Mammary epithelial cell (primary cell): ENCODE measurements at regions of chrX and their contacts with region 1.

Region 1: DNA sequence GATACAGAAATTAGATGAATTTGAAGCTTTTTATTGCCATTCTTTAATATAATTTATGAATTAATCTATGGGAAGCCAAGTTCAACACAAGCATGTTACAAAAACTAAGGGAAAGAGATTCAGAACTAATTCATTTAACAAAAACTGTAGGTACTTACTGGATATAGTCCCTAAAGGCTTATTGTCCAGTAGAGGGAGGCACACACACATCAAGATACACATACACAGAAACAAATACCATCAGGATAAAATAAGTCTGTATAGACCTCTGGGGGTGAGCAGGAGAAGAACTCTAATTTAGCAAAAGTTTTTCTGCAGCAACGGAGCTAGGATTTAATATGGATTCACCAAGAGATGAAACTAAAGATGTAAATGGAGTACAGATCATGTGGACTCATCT is 83.0 kb upstream of the IL13RA1 start:
- DNase-seq: peak; percentile 23
- H3K4me3 ChIP-seq: no peak overlapping the region
- H3K27ac ChIP-seq: no peak overlapping the region
- H3K4me1 ChIP-seq: no peaks in the 10 kb centered on the region
- H3K27me3 ChIP-seq: no peaks in the 10 kb centered on the region
- CTCF ChIP-seq: peak; percentile 21 to 57

Region 2: DNA sequence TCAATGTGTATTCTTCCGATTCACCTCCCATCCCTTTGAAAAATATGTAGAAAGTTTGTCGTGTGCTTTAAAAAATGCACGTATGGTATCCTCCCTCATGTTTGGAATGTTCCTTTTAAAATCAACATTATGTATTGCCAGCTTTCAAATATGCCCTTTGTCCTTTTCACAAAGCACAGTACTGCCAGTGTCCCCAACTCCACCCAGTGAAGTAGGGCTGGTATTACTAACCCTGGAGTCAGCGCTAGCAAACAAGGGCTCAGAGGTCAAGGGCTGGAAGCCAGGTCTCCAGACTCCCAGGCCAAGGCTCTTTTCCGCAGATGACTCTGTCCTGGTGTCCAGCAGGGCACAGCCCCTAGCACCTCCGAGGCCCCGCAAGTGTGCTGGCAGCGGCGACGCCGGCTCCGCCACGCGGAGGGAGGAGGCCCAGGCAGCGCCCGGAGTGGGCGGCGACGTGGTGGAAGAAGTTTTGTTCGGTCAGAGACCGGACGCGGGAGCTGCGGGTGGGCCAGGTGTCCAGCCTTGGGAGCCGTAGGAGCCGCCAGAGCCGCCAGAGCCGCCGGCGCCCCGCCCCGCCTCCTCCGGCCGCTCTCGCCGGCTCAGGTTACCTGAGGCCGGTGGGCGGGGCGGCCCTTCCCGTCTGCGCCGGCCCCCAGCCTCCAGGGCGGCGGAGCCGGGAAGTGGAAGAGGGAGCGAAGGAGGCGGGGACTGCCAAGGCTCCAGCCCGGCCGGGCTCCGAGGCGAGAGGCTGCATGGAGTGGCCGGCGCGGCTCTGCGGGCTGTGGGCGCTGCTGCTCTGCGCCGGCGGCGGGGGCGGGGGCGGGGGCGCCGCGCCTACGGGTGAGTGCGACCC is 82.7 kb after region 1 on chrX and contains the start of gene IL13RA1:
- CTCF ChIA-PET with region 1: no interaction called
- dilution Hi-C with region 1: no loop called
- in situ Hi-C with region 1: no loop called
- intact Hi-C with region 1: loop called (anchors 10 kb)
- DNase-seq: peak; percentile 84
- H3K4me3 ChIP-seq: peak within 1 kb of the TSS; percentile 53 to 67 (median 57)
- H3K27ac ChIP-seq: peak within 1 kb of the TSS; percentile 53
- H3K4me1 ChIP-seq: peaks cover 19% of the 10 kb centered on the region
- H3K27me3 ChIP-seq: no peaks in the 10 kb centered on the region
- CTCF ChIP-seq: no peak
- total RNA-seq, gene IL13RA1: 36.0 to 56.8 TPM

Region 3: DNA sequence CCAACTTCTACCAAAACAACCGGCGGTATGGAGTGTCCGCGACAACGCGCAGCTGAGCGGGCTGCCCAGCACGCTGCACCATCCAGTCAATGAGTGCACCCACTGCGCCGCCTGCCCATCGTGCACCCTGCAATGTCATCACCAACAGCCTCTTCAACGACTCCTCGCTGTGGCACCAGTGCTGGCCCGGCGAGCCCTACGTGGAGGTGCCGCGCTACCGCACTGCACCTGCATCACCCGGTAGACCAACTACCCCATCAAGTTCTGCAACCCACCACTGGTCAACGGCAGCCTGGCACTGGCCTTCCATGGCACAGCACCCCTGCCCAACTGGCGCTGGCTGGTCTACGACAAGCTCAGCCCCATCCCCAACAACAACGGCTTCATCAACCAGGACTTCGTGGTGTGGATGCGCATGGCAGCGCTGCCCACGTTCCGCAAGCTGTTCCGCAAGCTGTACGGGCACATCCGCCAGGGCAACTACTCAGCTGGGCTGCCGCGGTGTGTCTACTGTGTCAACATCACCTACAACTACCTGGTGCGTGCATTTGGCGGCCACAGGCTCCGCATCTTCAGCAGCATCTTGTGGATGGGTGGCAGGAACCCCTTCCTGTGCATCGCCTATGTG is 125.9 kb after region 1 on chrX:
- CTCF ChIA-PET with region 1: interaction called, 10 read pairs
- dilution Hi-C with region 1: no loop called
- in situ Hi-C with region 1: no loop called
- intact Hi-C with region 1: no loop called
- DNase-seq: no peak
- H3K4me3 ChIP-seq: no peak overlapping the region
- H3K27ac ChIP-seq: no peak overlapping the region
- H3K4me1 ChIP-seq: no peaks in the 10 kb centered on the region
- H3K27me3 ChIP-seq: no peaks in the 10 kb centered on the region
- CTCF ChIP-seq: no peak

Region 4: GRCh38 chrX:118807151-118808017 is 163.0 kb after region 1 on chrX:
- CTCF ChIA-PET with region 1: interaction called, 8 read pairs
- dilution Hi-C with region 1: loop called (anchors 25 kb)
- in situ Hi-C with region 1: loop called (anchors 5 to 10 kb)
- intact Hi-C with region 1: loop called (anchors 1 kb)
- DNase-seq: peak; percentile 29
- H3K4me3 ChIP-seq: no peak overlapping the region
- H3K27ac ChIP-seq: no peak overlapping the region
- H3K4me1 ChIP-seq: no peaks in the 10 kb centered on the region
- H3K27me3 ChIP-seq: peaks cover 2% of the 10 kb centered on the region
- CTCF ChIP-seq: peak; percentile 69 to 78